ENCODE measurements at regions of chr19 and their contacts with region 1.

Region 1: DNA sequence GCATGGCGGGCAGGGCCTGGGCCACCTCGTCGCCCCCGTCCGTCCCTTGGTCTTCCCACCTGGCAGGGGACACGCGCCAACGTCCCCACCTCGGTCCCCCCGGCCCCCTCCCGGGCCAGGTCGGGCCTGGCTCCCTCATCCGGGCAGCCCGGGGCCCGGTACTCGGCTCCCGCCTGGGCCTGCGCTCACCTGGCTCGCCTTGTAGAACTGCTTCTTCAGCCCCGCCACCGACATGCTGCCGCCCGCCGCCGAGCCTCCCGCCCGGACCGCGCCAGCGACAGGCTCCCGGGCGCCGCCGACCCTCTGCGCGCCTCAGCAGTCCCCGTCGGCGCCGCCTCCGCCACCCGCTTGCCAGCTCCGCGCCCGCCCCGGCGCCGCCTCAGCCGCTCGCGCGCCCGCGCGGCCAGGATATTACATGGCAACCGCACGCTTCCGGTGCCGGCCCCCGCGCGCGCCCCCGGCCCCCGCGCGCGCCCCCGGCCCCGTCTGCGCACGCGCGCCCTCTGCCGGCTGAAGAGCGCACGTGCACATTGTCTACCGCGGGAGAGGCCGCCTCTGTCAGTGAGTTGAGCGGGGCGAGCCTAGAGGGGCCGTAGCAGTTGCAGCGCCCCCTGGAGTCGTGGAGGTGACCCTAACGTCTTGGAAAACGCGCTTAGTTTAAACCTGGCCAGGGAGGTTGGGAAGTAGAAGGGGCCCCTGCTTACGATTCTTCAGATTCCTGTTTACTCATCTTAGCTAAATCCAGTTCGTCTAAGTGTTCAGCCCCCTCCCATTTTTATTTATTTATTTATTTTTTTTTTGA is at the start of gene SH3GL1:
- DNase-seq: peak; percentile 92
- H3K4me3 Mint-ChIP-seq: peak within 1 kb of the TSS; percentile 94
- H3K27ac Mint-ChIP-seq: peak within 1 kb of the TSS; percentile 92
- H3K4me1 Mint-ChIP-seq: peaks cover 70% of the 10 kb centered on the region
- H3K27me3 Mint-ChIP-seq: no peaks in the 10 kb centered on the region
- total RNA-seq, gene SH3GL1: 67.7 to 68.2 TPM

Region 2: DNA sequence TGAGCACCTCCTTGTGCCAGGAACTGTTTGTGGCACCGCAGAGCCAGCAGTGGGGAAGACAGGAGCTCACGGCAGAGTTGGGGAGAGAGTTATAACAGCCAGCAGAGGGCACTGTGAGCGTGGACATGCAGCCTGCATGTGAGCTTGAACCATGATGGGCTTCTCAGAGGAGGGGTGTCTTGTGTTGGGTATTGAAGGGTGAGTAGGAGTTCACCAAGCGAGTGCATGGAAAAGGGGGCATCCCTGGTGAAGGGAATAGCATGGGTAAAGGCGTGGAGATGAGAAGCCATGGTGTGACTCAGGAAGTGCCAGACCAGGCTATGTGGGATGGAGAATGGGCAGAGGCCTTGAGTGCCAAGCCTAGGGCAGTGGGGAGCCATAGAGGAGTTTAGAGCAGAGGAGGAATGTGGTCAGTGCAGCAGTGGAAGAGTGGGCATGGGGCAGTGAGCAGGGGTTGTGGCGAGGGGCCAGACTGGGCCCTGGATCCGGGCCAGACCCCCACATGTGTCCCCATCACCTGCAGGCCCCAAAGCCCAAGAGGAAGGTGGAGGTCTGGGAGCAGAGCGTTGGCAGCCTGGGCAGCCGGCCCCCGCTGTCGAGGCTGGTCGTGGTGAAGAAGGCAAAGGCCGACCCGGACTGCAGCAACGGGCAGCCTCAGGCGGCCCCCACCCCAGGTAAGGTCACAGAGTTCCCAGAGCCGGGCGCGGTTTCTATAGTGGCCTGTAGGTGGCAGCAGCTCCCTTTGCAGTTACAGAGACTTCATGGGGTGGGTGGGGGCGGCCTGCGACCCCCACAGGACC is 133.0 kb before region 1 on chr19:
- CTCF ChIA-PET with region 1: interaction called, 33 read pairs
- POLR2A ChIA-PET with region 1: no interaction called
- DNase-seq: peak; percentile 74
- H3K4me3 Mint-ChIP-seq: no peak overlapping the region
- H3K27ac Mint-ChIP-seq: no peak overlapping the region
- H3K4me1 Mint-ChIP-seq: peaks cover 35% of the 10 kb centered on the region
- H3K27me3 Mint-ChIP-seq: no peaks in the 10 kb centered on the region

Region 3: DNA sequence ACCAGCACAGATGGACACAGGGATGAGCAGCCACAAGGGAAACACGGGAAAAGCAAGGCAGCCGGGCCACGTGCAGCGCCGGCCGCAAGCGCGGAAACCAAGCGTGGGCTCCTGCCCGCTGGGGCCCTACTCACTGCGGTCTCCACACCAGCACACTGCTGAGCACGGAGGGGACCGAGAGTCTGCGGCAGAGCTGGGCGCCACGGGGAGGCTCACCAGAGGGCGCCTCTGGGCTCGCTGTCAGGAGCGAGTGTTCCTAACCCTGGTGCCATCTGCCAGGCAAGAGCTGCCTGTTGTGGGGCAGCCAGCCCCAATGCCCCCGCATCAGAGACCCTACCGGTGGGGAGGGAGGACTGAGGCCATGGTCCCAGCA is 30.5 kb before region 1 on chr19:
- CTCF ChIA-PET with region 1: interaction called, 25 read pairs
- POLR2A ChIA-PET with region 1: interaction called, 3 read pairs
- DNase-seq: peak; percentile 77
- H3K4me3 Mint-ChIP-seq: peak overlapping the region; percentile 62
- H3K27ac Mint-ChIP-seq: peak overlapping the region; percentile 93
- H3K4me1 Mint-ChIP-seq: peaks cover 68% of the 10 kb centered on the region
- H3K27me3 Mint-ChIP-seq: no peaks in the 10 kb centered on the region

Region 4: DNA sequence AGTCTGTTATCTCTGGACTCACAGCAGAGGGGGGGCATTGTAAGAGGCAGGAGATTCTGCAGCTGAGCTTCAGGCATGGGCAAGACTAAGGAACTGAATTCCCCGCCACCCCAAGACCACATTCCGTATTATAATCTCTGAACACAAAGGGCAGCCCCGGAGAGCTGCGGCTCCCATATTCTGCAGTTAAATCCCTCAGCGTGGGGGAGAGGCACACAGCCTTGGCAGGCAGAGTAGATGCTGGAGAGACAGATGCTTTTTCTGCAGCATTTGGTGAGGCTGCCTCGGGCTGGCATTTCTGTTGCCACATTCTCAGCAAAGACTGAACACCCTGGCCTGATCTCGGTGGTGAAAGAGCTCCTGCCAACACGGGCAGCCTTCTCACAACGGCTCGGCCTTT is 15.0 kb after region 1 on chr19:
- CTCF ChIA-PET with region 1: interaction called, 52 read pairs
- POLR2A ChIA-PET with region 1: no interaction called
- DNase-seq: no peak
- H3K4me3 Mint-ChIP-seq: no peak overlapping the region
- H3K27ac Mint-ChIP-seq: no peak overlapping the region
- H3K4me1 Mint-ChIP-seq: no peaks in the 10 kb centered on the region
- H3K27me3 Mint-ChIP-seq: no peaks in the 10 kb centered on the region

Region 5: GRCh38 chr19:4471403-4472173 is 71.3 kb after region 1 on chr19:
- CTCF ChIA-PET with region 1: interaction called, 11 read pairs
- POLR2A ChIA-PET with region 1: no interaction called
- DNase-seq: peak; percentile 99
- H3K4me3 Mint-ChIP-seq: no peak overlapping the region
- H3K27ac Mint-ChIP-seq: no peak overlapping the region
- H3K4me1 Mint-ChIP-seq: peaks cover 23% of the 10 kb centered on the region
- H3K27me3 Mint-ChIP-seq: no peaks in the 10 kb centered on the region